ENCODE measurements at regions of chr11 and their contacts with region 1.

Region 1: DNA sequence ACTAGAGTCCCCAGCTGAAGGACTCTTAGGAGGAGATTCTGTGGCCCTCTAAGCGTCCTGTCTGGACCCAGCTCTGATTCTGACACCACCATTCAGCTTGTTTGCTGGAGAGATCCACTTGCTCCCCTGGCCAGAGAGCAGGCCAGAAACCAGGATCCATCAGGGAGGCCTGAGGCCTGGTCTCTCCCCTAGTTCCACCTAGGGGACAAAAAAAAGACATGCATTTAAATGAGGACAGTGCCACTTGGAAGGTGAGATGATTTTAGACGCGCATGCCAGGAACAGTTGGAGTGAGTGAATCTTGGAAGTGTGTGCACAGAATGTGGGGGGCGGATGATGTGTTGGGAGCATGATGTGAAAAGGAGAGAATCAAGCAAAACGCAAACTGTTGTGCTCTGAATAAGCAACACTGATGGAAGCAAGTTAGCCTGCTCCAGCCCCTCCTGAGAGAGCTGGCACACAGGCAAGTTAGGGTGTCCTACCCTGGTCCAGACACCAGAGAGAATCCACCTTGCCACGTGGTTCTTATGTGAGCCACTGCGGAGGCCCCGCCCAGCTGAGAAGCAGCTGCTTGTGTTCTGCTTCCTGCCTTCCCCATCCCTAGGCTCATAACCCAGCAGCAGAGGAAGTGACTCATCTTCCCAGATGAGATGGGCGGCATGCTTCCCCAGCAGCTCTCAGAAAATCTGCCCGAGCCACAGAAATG is 8.0 kb upstream of the SLCO2B1 start:
- DNase-seq: peak; percentile 79 to 82
- ATAC-seq: peak; percentile 75 to 82 (median 79)
- H3K4me3 ChIP-seq: no peak overlapping the region
- H3K27ac ChIP-seq: no peak overlapping the region
- H3K4me1 ChIP-seq: peaks cover 3% of the 10 kb centered on the region
- H3K27me3 ChIP-seq: peaks cover 0 to 8% (median 0%) of the 10 kb centered on the region in 3 donors
- CTCF ChIP-seq: no peak

Region 2: GRCh38 chr11:74683279-74683871 is 459.5 kb before region 1 on chr11:
- intact Hi-C with region 1: no loop called
- DNase-seq: peak; percentile 44 to 61
- ATAC-seq: peak; percentile 30 to 51 (median 44)
- H3K4me3 ChIP-seq: peak overlapping the region; percentile 75
- H3K27ac ChIP-seq: peak overlapping the region; percentile 72
- H3K4me1 ChIP-seq: peaks cover 19% of the 10 kb centered on the region
- H3K27me3 ChIP-seq: no peaks in the 10 kb centered on the region
- CTCF ChIP-seq: peak; percentile 51

Region 3: DNA sequence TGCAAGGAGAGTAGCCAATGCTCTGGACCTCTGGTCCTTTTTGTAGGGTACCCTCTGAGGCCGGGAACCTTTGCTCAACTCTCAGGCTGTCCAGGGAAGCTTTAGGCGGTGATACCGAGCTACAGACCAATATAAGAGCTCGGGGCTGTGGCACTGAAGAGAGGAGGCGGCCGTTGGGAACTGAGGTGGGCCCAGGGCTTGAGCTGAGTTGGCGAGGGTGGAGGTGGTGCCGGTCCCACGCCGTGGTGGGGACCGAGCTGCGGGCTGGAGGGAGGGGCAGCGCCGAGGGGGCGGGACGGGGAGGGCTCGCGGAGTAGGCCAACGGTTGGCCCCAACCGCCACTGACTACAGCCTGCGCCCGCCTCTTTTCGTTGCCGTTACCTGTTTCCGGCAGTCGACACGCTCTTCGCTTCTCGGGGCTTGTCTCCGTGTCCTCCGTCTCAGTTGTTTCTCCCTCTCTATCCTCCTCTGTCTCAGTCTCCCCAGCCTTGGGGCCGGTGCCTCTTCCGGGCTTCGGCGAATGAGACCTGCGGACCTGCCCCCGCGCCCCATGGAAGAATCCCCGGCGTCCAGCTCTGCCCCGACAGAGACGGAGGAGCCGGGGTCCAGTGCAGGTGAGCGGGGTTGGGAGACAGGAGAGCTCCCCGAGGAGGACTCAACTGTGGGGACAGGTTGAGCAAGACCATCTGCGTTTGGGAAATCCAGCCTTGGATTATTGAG is 154.2 kb before region 1 on chr11 and contains the start of gene NEU3:
- intact Hi-C with region 1: no loop called
- DNase-seq: peak; percentile 79 to 89
- ATAC-seq: peak; percentile 90 to 94 (median 92)
- H3K4me3 ChIP-seq: peak within 1 kb of the TSS; percentile 95
- H3K27ac ChIP-seq: peak within 1 kb of the TSS; percentile 93
- H3K4me1 ChIP-seq: peaks cover 20% of the 10 kb centered on the region
- H3K27me3 ChIP-seq: no peaks in the 10 kb centered on the region
- CTCF ChIP-seq: no peak
- total RNA-seq, gene NEU3: 14.0 to 26.7 (median 18.0) TPM

Region 4: GRCh38 chr11:75063732-75064314 is 79.0 kb before region 1 on chr11:
- intact Hi-C with region 1: no loop called
- DNase-seq: no peak
- ATAC-seq: no peak
- H3K4me3 ChIP-seq: no peak overlapping the region
- H3K27ac ChIP-seq: no peak overlapping the region
- H3K4me1 ChIP-seq: no peaks in the 10 kb centered on the region
- H3K27me3 ChIP-seq: no peaks in the 10 kb centered on the region
- CTCF ChIP-seq: no peak

Region 5: GRCh38 chr11:75204685-75205563 is 62.1 kb after region 1 on chr11:
- intact Hi-C with region 1: loop called (anchors 1 to 5 kb)
- DNase-seq: peak; percentile 87 to 92
- ATAC-seq: peak; percentile 88 to 95 (median 92)
- H3K4me3 ChIP-seq: no peak overlapping the region
- H3K27ac ChIP-seq: no peak overlapping the region
- H3K4me1 ChIP-seq: no peaks in the 10 kb centered on the region
- H3K27me3 ChIP-seq: peaks cover 0 to 4% (median 0%) of the 10 kb centered on the region in 3 donors
- CTCF ChIP-seq: peak; percentile 85

Region 6: DNA sequence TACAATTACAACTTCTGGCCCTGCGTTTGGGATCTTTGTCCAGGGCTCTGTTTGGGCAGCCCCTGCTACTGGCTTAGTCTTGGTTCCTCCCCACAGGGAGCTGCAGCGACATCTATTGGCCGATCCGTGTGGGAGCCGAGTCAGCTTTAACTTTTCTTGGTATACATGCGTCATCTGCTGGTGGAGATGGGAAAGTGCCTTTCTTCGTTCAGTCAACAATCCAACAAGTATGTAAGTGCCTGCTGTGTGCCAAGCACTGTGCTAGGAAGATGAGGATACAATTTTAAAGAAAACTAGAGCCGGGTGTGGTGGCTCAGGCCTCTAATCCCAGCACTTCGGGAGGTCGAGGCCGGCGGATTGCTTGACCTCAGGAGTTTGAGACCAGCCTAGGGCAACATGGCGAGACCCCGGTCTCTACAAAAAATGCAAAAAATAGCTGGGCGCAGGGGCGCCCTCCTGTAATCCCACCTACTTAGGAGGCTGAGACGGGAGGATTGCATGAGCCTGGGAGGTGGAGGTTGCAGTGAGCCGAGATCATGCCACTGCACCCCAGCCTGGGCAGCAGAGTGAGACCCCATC is 105.9 kb after region 1 on chr11:
- intact Hi-C with region 1: loop called (anchors 1 to 2 kb)
- DNase-seq: peak; percentile 85 to 93
- ATAC-seq: peak; percentile 88 to 98 (median 94)
- H3K4me3 ChIP-seq: no peak overlapping the region
- H3K27ac ChIP-seq: no peak overlapping the region
- H3K4me1 ChIP-seq: peaks cover 4% of the 10 kb centered on the region
- H3K27me3 ChIP-seq: no peaks in the 10 kb centered on the region
- CTCF ChIP-seq: peak; percentile 99

Measured in psoas muscle (tissue), 8 donors.